Psoas muscle (tissue), 8 donors: ENCODE measurements at regions of chr16 and their contacts with region 1.

Region 1: DNA sequence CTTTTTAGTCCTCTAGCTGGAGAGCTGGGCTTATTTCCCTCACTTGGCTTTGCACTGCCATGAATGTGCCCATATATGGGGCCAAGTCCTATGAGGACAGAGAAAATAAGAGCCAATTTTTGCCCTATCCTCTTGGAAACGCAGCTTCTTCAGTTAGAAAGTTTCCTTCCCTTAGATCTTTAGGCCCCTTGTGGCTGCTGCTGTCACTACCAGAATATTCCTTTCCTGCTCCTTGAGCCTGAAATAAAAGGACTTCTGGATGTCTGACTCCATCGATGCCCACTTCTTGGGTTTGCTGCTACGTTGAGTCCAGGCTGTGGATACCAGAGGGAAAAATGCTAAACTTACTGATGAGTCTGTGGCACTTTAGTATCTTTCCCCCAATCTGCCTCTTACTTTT is 487.1 kb downstream of the GRIN2A start:
- DNase-seq: no peak
- ATAC-seq: no peak
- H3K4me3 ChIP-seq: no peak overlapping the region
- H3K27ac ChIP-seq: no peak overlapping the region
- H3K4me1 ChIP-seq: no peaks in the 10 kb centered on the region
- H3K27me3 ChIP-seq: peaks cover 0 to 4% (median 0%) of the 10 kb centered on the region in 3 donors
- CTCF ChIP-seq: no peak

Region 2: GRCh38 chr16:9425236-9425635 is 269.9 kb before region 1 on chr16:
- intact Hi-C with region 1: loop called in 1 of 2 experiments (anchors 10 kb)
- DNase-seq: no peak
- ATAC-seq: no peak
- H3K4me3 ChIP-seq: no peak overlapping the region
- H3K27ac ChIP-seq: no peak overlapping the region
- H3K4me1 ChIP-seq: no peaks in the 10 kb centered on the region
- H3K27me3 ChIP-seq: no peaks in the 10 kb centered on the region
- CTCF ChIP-seq: no peak

Region 3: DNA sequence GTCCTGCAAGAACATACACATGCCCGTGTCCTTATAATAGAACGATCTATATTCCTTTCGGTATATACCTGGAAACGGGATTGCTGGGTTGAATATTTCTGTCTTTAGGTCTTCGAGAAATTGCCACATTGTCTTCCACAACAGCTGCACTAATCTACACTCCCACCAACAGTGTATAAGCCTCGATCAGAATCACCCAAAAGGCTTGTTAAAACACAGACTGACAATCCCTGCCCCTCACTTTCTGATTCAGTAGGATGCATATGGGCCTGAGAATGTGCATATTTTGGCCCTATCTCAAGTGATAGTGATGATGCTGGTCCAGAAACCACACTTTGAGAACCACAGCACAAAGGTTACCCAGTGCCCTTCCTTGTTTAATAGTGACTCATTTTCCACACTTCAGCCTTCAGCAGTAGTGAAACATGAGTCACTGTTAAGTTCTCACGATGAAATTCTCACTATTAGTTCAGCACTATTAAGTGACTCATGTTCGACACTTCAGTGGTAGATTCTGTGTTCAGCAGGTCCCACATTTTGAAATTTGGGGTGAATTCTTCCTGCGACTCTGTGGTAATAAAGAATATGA is 271.5 kb after region 1 on chr16:
- intact Hi-C with region 1: no loop called
- DNase-seq: no peak
- ATAC-seq: no peak
- H3K4me3 ChIP-seq: no peak overlapping the region
- H3K27ac ChIP-seq: no peak overlapping the region
- H3K4me1 ChIP-seq: no peaks in the 10 kb centered on the region
- H3K27me3 ChIP-seq: no peaks in the 10 kb centered on the region
- CTCF ChIP-seq: no peak

Region 4: DNA sequence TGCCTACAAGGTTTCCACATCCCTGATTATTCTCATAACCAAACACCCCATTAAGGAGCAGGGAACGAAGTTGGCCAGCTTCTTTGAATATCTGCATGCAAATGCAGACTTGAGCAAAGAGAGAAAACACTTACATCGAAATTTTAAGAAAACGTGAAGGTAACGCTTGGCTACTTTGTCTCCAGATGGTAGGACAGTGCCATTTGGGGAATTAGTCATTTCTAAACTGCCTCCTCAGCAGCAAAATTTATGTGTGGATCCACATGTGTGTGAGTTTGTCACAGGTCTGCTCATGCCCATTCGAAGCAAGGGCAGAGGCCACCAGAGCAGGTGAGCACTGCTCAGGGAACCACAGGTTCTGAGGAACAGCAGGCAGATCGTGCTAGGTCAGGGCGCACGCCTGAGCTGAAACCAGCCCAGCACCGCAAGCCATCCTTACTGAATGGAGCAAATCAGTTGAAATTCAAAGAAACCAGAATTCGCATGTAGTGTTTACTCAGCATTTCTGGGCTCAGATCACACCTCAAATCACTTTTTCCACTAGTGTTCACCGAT is 1480.7 kb after region 1 on chr16:
- intact Hi-C with region 1: no loop called
- DNase-seq: no peak
- ATAC-seq: no peak
- H3K4me3 ChIP-seq: no peak overlapping the region
- H3K27ac ChIP-seq: no peak overlapping the region
- H3K4me1 ChIP-seq: no peaks in the 10 kb centered on the region
- H3K27me3 ChIP-seq: no peaks in the 10 kb centered on the region
- CTCF ChIP-seq: no peak